ENCODE measurements at regions of chr2 and their contacts with region 1.

Region 1: GRCh38 chr2:85750587-85751575 is 2.9 kb upstream of the ATOH8 start:
- DNase-seq: peak; percentile 22 to 56 (median 36)
- H3K4me3 ChIP-seq: no peak overlapping the region
- H3K4me3 Mint-ChIP-seq: peak overlapping the region in 2 of 7 donors; percentile 35 to 78
- H3K27ac ChIP-seq: no peak overlapping the region
- H3K27ac Mint-ChIP-seq: peak overlapping the region in 1 of 8 donors; percentile 37
- H3K4me1 ChIP-seq: peaks cover 10% of the 10 kb centered on the region
- H3K4me1 Mint-ChIP-seq: peaks cover 12 to 26% (median 14%) of the 10 kb centered on the region in 3 donors
- H3K27me3 ChIP-seq: peaks cover 35% of the 10 kb centered on the region
- H3K27me3 Mint-ChIP-seq: peaks cover 40 to 69% of the 10 kb centered on the region in 2 donors

Region 2: DNA sequence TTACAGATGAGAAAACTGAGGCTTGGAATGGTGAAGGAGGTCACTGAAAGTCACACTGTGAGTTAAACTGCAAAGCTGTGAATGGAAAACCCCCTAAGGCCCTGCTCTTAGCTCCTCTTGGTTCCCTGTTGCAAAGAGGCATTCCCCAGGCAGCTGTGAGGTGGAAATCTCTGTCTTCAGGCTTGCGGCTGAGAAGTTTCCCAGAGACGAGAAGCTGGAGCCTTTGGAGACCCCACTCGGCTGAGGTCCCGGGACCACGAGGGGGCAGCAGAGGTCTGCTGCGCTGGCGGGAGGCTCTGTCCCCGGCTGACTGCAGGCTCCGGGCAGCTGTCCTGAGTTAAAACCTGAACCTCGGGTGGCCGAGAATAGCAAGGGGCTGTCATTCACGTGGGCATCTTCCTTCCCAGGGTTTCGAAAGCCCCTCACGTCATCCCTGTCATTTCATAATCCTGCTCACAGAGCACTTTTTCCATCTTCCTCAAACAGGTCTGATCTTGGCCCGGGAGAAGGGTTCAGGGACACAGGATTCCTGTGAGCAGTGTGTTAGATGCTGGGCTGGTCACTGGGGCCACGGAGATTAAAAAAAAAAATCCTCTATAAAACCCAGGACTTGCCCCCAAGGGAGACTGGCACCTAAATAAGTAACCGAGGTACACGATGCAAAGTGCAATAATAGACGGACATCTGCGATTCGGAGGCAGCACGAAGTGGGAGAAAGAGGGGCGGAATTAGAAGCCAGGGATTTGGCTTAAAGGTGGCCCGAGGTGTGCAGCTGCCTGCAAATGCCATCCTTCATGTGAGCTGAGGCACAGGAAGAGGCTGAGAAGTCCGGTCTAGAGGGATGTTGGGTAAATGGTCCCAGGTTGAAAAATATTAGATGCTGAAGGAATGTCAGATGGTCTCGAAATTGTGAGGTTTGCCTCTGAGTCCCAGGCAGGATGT is 21.7 kb before region 1 on chr2:
- CTCF ChIA-PET with region 1: interaction called, 12 read pairs
- POLR2A ChIA-PET with region 1: no interaction called
- DNase-seq: peak; percentile 48 to 69 (median 60)
- H3K4me3 ChIP-seq: no peak overlapping the region
- H3K4me3 Mint-ChIP-seq: no peak overlapping the region
- H3K27ac ChIP-seq: no peak overlapping the region
- H3K27ac Mint-ChIP-seq: peak overlapping the region in 1 of 8 donors; percentile 56
- H3K4me1 ChIP-seq: peaks cover 8% of the 10 kb centered on the region
- H3K4me1 Mint-ChIP-seq: peaks cover 0 to 11% (median 0%) of the 10 kb centered on the region in 3 donors
- H3K27me3 ChIP-seq: peaks cover 6% of the 10 kb centered on the region
- H3K27me3 Mint-ChIP-seq: peaks cover 18 to 19% of the 10 kb centered on the region in 2 donors

Region 3: GRCh38 chr2:85804583-85804982 is 53.7 kb after region 1 on chr2:
- CTCF ChIA-PET with region 1: no interaction called
- POLR2A ChIA-PET with region 1: no interaction called
- DNase-seq: peak in 2 of 5 donors; percentile 25 to 29
- H3K4me3 ChIP-seq: no peak overlapping the region
- H3K4me3 Mint-ChIP-seq: peak overlapping the region in 2 of 7 donors; percentile 10 to 28
- H3K27ac ChIP-seq: no peak overlapping the region
- H3K27ac Mint-ChIP-seq: peak overlapping the region in 1 of 8 donors; percentile 6
- H3K4me1 ChIP-seq: peaks cover 9% of the 10 kb centered on the region
- H3K4me1 Mint-ChIP-seq: peaks cover 14 to 16% (median 15%) of the 10 kb centered on the region in 3 donors
- H3K27me3 ChIP-seq: no peaks in the 10 kb centered on the region
- H3K27me3 Mint-ChIP-seq: peaks cover 2 to 10% of the 10 kb centered on the region in 2 donors

Measured in CD8-positive, alpha-beta memory T cell (primary cell).